Endothelial cell of umbilical vein (primary cell): ENCODE measurements at regions of chr19 and their contacts with region 1.

Region 1: DNA sequence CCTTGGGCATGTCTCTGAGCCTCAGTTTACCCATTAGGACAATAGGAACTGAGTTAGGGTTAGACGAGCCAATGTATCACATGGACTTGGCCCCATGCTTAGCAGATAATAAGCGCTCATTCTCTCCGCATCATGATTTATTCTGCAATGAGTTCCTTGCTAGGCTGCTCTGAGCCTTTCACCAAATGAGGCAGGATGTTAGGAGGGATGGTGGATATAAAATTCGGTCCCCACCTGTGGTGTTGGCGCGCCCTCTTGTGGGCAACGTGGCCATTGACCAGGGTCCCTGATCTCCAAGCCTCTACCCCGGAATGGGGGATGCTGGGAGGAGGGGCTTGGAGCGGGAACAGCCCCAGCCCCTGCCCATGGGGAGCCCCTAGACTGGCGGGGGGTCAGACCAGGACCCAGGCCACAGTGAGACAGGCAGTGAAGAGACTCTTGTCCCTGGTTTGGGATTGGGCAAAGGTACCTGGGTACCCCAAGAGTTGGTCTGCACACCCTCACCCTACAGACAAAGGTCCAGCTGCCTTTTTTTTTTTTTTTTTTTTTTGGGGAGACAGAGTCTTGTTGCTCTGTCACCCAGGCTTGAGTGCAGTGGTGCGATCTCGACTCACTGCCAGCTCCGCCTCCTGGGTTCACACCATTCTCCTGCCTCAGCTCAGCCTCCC is 43.9 kb downstream of the CERS4 start:
- DNase-seq: peak; percentile 69
- H3K4me3 ChIP-seq: no peak overlapping the region
- H3K27ac ChIP-seq: no peak overlapping the region
- H3K4me1 ChIP-seq: no peaks in the 10 kb centered on the region
- H3K27me3 ChIP-seq: no peaks in the 10 kb centered on the region
- CTCF ChIP-seq: peak; percentile 88 to 91
- POLR2A ChIP-seq: no peak

Region 2: GRCh38 chr19:7852851-7853769 is 399.9 kb before region 1 on chr19:
- CTCF ChIA-PET with region 1: no interaction called
- POLR2A ChIA-PET with region 1: no interaction called
- dilution Hi-C with region 1: no loop called
- intact Hi-C with region 1: loop called (anchors 1 kb)
- DNase-seq: peak; percentile 49
- H3K4me3 ChIP-seq: no peak overlapping the region
- H3K27ac ChIP-seq: no peak overlapping the region
- H3K4me1 ChIP-seq: no peaks in the 10 kb centered on the region
- H3K27me3 ChIP-seq: no peaks in the 10 kb centered on the region
- CTCF ChIP-seq: peak; percentile 63 to 92
- POLR2A ChIP-seq: no peak

Region 3: GRCh38 chr19:7970716-7971448 is 282.2 kb before region 1 on chr19:
- CTCF ChIA-PET with region 1: interaction called, 11 read pairs
- POLR2A ChIA-PET with region 1: no interaction called
- dilution Hi-C with region 1: no loop called
- intact Hi-C with region 1: loop called (anchors 1 kb)
- DNase-seq: peak; percentile 27
- H3K4me3 ChIP-seq: no peak overlapping the region
- H3K27ac ChIP-seq: no peak overlapping the region
- H3K4me1 ChIP-seq: no peaks in the 10 kb centered on the region
- H3K27me3 ChIP-seq: no peaks in the 10 kb centered on the region
- CTCF ChIP-seq: peak; percentile 67 to 88
- POLR2A ChIP-seq: no peak

Region 4: GRCh38 chr19:8005534-8006256 is 247.4 kb before region 1 on chr19 and contains the start of gene ELAVL1:
- CTCF ChIA-PET with region 1: interaction called, 6 read pairs
- POLR2A ChIA-PET with region 1: no interaction called
- dilution Hi-C with region 1: no loop called
- intact Hi-C with region 1: loop called (anchors 1 kb)
- DNase-seq: peak; percentile 88
- H3K4me3 ChIP-seq: peak within 1 kb of the TSS; percentile 81 to 96 (median 84)
- H3K27ac ChIP-seq: peak within 1 kb of the TSS; percentile 53
- H3K4me1 ChIP-seq: peaks cover 22% of the 10 kb centered on the region
- H3K27me3 ChIP-seq: no peaks in the 10 kb centered on the region
- CTCF ChIP-seq: no peak
- POLR2A ChIP-seq: peak; percentile 67
- total RNA-seq, gene ELAVL1: 124 and 134 TPM in 2 replicates

Region 5: DNA sequence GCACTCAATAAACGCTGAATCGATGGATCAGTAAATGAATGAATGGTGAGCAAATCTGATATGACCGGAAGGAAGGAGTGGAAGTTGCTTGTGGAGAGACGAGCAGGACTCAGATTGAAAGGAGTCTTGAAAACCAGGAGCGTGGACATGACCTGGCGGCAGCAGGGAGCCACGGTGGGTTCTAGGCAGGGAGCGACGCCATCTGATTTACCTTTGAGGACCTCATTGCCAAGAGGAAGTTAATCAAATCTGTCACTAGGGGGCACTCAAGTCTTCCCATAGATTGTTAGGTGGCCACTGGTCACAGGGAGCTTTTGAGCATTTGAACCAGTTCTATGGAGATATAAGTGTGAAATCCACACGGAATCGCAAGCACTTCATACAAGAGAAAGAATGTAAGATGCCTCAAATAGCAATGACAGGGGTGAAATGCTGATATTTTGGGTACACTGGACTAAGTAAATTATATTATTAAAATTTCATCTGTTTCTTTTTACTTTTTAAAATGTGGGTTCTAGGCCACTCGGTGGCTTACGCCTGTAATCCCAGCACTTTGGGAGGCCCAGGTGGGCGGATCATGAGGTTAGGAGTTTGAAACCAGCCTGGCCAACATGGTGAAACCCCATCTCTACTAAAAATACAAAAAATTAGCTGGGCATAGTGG is 94.5 kb before region 1 on chr19:
- CTCF ChIA-PET with region 1: interaction called, 117 read pairs
- POLR2A ChIA-PET with region 1: interaction called, 6 read pairs
- dilution Hi-C with region 1: no loop called
- intact Hi-C with region 1: loop called (anchors 1 kb)
- DNase-seq: peak; percentile 59
- H3K4me3 ChIP-seq: no peak overlapping the region
- H3K27ac ChIP-seq: no peak overlapping the region
- H3K4me1 ChIP-seq: peaks cover 3% of the 10 kb centered on the region
- H3K27me3 ChIP-seq: no peaks in the 10 kb centered on the region
- CTCF ChIP-seq: peak; percentile 45 to 62
- POLR2A ChIP-seq: no peak

Region 6: DNA sequence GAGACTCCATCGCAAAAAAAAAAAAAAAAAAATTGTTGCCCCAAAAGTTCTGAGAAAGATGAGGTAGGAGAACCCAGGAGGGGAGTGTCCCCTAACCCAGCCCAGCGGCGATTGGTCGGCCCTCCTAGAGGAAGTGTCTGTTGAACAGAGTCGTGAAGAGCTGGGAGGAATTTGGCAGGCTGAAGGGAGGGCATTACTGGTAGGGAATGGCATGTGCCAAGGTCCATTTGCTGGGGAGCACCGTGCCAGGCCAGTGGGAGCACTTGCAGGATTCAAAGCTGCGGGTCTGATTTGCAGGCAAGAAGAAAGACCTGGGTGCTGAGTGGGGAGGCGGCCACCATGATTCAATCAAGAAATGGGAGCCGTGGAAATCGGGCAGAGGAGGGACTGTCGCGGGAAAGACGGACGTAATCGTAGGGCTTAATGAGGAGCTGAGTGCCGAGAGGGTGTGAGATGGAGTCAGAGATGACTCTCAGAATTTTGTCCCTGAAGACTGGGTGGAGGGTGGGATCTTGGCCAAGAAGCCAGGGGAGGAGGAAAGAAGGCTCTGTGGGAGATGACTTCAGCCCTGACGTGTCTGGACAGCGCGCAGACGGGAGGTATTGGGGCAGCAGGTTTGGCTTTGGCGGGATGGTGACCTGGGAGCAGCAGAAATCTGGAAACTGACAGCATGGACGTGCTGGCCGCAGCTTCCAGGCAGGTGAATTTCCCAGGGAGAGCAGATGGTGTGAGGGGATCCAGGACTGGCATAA is 28.5 kb before region 1 on chr19:
- CTCF ChIA-PET with region 1: no interaction called
- POLR2A ChIA-PET with region 1: no interaction called
- dilution Hi-C with region 1: no loop called
- intact Hi-C with region 1: no loop called
- DNase-seq: no peak
- H3K4me3 ChIP-seq: no peak overlapping the region
- H3K27ac ChIP-seq: no peak overlapping the region
- H3K4me1 ChIP-seq: no peaks in the 10 kb centered on the region
- H3K27me3 ChIP-seq: no peaks in the 10 kb centered on the region
- CTCF ChIP-seq: no peak
- POLR2A ChIP-seq: no peak

Region 7: DNA sequence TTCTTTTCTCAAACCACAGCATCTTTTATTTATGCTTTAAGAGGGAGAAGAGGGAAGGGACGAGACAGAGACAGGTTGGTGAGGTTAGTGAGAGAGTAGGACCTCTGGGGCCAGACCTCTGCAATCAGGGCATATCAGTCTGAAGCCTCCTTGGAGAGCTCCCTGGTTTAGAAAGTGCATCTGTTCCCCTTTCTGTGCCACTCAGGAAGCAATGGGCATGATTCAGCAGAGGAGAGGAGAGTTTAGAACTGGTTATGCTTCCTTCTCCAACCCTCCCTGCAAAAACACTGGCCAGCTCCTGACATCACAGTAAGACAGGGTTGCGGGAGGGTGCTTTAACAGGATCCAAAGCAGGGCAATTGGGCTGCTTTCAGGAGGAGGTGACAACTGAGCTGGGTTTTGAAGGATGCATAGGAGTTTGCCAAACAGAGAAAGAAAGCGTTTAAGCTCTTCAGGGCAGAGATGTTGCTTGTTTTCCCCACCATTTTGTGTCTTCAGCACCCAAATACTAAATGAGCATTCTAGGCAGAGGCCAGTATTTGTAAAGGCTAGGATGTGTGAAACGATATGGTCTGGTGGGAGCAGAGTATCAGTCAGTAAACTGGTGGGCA is 10.7 kb before region 1 on chr19:
- CTCF ChIA-PET with region 1: interaction called, 10 read pairs
- POLR2A ChIA-PET with region 1: no interaction called
- dilution Hi-C with region 1: no loop called
- intact Hi-C with region 1: no loop called
- DNase-seq: no peak
- H3K4me3 ChIP-seq: no peak overlapping the region
- H3K27ac ChIP-seq: no peak overlapping the region
- H3K4me1 ChIP-seq: no peaks in the 10 kb centered on the region
- H3K27me3 ChIP-seq: no peaks in the 10 kb centered on the region
- CTCF ChIP-seq: no peak
- POLR2A ChIP-seq: no peak